ENCODE measurements at regions of chr7 and their contacts with region 1.

Region 1: GRCh38 chr7:142811154-142811737 is 40.5 kb downstream of the PRSS2 start:
- DNase-seq: peak in 8 of 10 donors; percentile 44 to 83 (median 68)
- ATAC-seq: no peak
- H3K4me3 Mint-ChIP-seq: peak overlapping the region; percentile 2 to 93 (median 62)
- H3K27ac Mint-ChIP-seq: peak overlapping the region; percentile 94 to 100 (median 100)
- H3K4me1 Mint-ChIP-seq: peaks cover 51 to 86% (median 84%) of the 10 kb centered on the region in 4 donors
- H3K27me3 Mint-ChIP-seq: peaks cover 0 to 2% (median 0%) of the 10 kb centered on the region in 5 donors

Region 2: DNA sequence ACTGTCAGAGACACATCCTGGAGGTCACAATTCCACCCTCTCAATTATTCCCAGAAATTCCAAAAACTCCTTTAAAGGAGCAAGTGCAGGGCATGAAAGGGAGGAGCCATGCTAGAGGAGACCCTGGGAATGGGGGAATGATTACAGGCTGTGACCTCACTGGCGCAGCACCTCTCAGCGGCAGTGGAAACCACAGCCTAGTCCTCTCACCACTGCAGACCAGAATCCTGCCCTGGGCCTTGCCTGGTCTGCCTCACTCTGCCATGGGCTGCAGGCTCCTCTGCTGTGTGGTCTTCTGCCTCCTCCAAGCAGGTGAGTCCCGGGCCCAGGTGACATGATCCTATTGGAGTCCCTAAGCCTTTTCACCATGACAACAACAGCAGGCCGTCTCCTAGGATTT is 502.9 kb before region 1 on chr7:
- POLR2A ChIA-PET with region 1: interaction called, 39 read pairs
- DNase-seq: no peak
- ATAC-seq: no peak
- H3K4me3 Mint-ChIP-seq: peak overlapping the region in 7 of 10 donors; percentile 23 to 68 (median 40)
- H3K27ac Mint-ChIP-seq: peak overlapping the region in 3 of 10 donors; percentile 26 to 79 (median 63)
- H3K4me1 Mint-ChIP-seq: peaks cover 14 to 26% (median 20%) of the 10 kb centered on the region in 4 donors
- H3K27me3 Mint-ChIP-seq: peaks cover 4 to 43% (median 11%) of the 10 kb centered on the region in 5 donors

Region 3: DNA sequence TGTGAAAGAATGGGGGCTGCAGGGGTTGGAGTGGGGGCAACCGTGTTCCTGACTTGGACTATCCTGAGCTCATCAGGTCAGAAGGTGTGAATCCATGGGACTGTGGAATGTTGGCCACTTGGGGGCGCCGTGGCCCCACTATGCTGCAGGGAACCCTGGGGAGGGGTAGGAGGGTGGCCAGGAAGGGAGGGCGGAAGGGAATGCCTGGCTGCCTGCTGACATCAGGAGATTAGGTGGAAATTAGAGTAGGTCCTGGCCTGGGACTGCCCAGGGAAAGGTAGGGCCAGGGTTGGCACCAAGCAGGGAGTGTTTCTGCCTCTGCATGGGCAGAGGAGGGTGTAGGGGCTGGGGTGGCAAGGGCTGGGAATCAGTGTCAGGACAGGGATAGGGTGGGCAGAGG is 487.5 kb before region 1 on chr7:
- POLR2A ChIA-PET with region 1: interaction called, 32 read pairs
- DNase-seq: peak in 5 of 10 donors; percentile 29 to 67 (median 36)
- ATAC-seq: peak; percentile 48 to 55
- H3K4me3 Mint-ChIP-seq: peak overlapping the region in 3 of 10 donors; percentile 12 to 75 (median 33)
- H3K27ac Mint-ChIP-seq: peak overlapping the region in 9 of 10 donors; percentile 9 to 91 (median 52)
- H3K4me1 Mint-ChIP-seq: peaks cover 17 to 20% (median 18%) of the 10 kb centered on the region in 4 donors
- H3K27me3 Mint-ChIP-seq: peaks cover 2 to 41% (median 6%) of the 10 kb centered on the region in 5 donors

Region 4: DNA sequence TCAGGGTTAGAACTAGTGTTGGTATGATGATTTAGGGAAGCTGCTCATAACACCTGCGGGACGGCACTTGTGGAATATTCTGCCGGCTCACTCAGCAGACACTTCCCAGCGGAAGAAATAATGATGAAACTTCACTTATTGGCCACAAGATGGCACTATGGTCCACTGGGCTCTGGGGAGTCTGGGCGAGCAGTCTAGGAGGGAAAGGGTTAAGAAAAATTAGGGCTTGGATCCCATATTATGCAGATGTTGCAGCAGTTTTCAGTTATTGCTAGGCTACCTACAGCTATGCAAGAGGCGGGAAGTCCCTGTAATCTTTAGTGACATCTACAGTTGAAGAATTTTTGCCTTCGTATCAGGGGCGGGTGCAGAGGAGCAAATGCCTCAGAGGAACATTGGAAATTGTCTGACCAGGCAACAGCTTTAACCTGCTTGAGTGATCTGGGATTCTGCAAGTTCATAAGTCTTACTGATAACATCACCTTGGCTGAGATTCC is 314.7 kb before region 1 on chr7:
- POLR2A ChIA-PET with region 1: interaction called, 27 read pairs
- DNase-seq: peak in 5 of 10 donors; percentile 10 to 42 (median 34)
- ATAC-seq: peak; percentile 27 to 43
- H3K4me3 Mint-ChIP-seq: peak overlapping the region in 9 of 10 donors; percentile 23 to 81 (median 65)
- H3K27ac Mint-ChIP-seq: peak overlapping the region; percentile 51 to 88 (median 72)
- H3K4me1 Mint-ChIP-seq: peaks cover 24 to 59% (median 39%) of the 10 kb centered on the region in 4 donors
- H3K27me3 Mint-ChIP-seq: no peaks in the 10 kb centered on the region

Region 5: DNA sequence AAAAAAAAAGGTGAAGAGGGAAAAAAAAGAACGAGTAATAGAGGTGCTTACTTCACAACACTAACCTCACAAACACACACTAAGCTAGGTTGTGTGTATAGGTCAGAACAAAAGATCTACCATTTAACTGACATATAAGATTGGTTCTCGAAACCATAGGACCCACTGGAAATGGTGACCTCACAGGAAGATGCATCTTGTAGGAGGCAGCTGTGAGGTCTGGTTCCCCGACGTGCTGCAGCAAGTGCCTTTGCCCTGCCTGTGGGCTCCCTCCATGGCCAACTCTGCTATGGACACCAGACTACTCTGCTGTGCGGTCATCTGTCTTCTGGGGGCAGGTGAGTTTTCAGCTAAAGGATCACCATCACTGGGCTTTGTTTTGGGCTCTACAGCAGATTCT is 195.7 kb before region 1 on chr7:
- POLR2A ChIA-PET with region 1: interaction called, 17 read pairs
- DNase-seq: no peak
- ATAC-seq: peak in 1 of 2 donors; percentile 29
- H3K4me3 Mint-ChIP-seq: peak overlapping the region; percentile 38 to 82 (median 70)
- H3K27ac Mint-ChIP-seq: peak overlapping the region; percentile 41 to 92 (median 76)
- H3K4me1 Mint-ChIP-seq: peaks cover 0 to 8% (median 0%) of the 10 kb centered on the region in 4 donors
- H3K27me3 Mint-ChIP-seq: peaks cover 0 to 6% (median 3%) of the 10 kb centered on the region in 5 donors

Region 6: DNA sequence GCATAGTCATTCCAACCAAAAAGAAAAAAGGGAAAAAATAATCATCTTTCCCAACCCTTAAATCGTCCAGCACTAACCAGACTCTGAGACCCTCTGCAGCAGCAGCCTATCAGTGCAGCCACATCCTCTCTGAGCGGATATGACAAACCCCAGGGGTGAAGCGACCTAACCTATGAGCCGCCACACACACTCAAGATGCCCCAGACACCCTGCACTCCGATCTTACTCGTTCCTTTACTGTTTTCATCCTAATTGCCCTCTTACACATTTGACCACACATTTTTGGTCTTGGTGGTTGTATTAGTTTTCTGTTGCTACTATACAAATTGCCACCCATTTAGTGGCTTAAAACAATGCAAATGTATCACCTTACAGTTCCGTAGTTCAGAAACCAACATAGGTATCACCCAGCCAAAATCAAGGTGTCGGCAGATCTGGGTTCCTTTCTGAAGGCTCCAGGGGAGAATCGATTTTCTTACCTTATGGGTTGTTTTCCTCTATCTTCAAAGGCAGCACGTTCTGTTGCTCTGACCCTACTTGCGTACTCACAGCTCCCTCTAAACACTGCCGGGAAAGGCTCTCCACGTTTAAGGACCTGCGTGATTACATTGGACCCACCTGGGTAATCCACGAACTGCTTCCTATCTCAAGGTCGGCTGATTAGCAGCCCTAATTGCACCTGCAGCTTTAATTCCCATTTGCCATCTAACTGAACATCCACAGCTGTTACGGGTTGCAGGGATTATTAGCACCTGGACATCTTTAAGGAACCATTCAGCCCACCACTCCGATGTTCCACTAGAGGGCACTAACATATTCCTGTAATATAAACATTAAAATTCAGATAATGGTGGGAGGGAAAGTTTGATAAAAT is 99.3 kb before region 1 on chr7:
- POLR2A ChIA-PET with region 1: interaction called, 96 read pairs
- DNase-seq: peak in 3 of 10 donors; percentile 15 to 44 (median 29)
- ATAC-seq: peak; percentile 76 to 82
- H3K4me3 Mint-ChIP-seq: peak overlapping the region; percentile 84 to 94 (median 90)
- H3K27ac Mint-ChIP-seq: peak overlapping the region; percentile 89 to 96 (median 95)
- H3K4me1 Mint-ChIP-seq: peaks cover 10 to 79% (median 61%) of the 10 kb centered on the region in 4 donors
- H3K27me3 Mint-ChIP-seq: no peaks in the 10 kb centered on the region

Region 7: GRCh38 chr7:142853739-142854371 is 42.6 kb after region 1 on chr7:
- POLR2A ChIA-PET with region 1: interaction called, 25 read pairs
- DNase-seq: peak; percentile 42 to 81 (median 62)
- ATAC-seq: peak; percentile 82 to 84
- H3K4me3 Mint-ChIP-seq: peak overlapping the region; percentile 89 to 99 (median 96)
- H3K27ac Mint-ChIP-seq: peak overlapping the region; percentile 33 to 94 (median 88)
- H3K4me1 Mint-ChIP-seq: peaks cover 12 to 25% (median 20%) of the 10 kb centered on the region in 4 donors
- H3K27me3 Mint-ChIP-seq: peaks cover 0 to 3% (median 0%) of the 10 kb centered on the region in 5 donors